Endothelial cell of umbilical vein (primary cell): ENCODE measurements at regions of chr14 and their contacts with region 1.

Region 1: DNA sequence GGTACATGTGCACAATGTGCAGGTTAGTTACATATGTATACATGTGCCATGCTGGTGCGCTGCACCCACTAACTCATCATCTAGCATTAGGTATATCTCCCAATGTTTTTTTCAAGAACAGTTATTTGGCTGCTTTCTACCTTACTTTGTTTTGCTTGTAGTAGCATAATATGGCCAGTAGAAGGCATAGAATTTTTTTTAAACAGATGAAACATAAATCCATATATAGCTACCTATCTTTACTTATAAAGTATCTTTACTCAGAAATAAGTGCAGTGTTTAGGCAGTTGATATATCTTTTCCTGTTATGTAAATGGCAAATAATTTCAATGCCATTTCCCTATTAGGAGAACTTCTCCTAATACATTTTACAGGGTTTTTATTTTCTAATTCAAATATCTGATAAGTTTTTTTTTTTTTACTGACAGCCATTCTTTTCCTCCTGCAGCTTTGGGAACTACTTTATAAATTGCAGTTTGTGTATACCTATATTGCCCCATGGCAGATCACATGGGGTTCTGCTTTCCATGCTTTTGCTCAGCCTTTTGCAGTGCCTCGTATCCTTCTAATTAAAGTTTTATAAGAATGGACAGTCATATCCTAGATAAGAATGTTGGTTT is 143.1 kb downstream of the PCNX1 start:
- DNase-seq: peak; percentile 28
- H3K4me3 ChIP-seq: no peak overlapping the region
- H3K27ac ChIP-seq: no peak overlapping the region
- H3K4me1 ChIP-seq: no peaks in the 10 kb centered on the region
- H3K27me3 ChIP-seq: no peaks in the 10 kb centered on the region
- CTCF ChIP-seq: peak in 1 of 2 donors; percentile 17
- POLR2A ChIP-seq: no peak

Region 2: GRCh38 chr14:70887207-70887681 is 163.1 kb before region 1 on chr14:
- CTCF ChIA-PET with region 1: no interaction called
- POLR2A ChIA-PET with region 1: no interaction called
- dilution Hi-C with region 1: no loop called
- intact Hi-C with region 1: no loop called
- DNase-seq: no peak
- H3K4me3 ChIP-seq: no peak overlapping the region
- H3K27ac ChIP-seq: no peak overlapping the region
- H3K4me1 ChIP-seq: peaks cover 10% of the 10 kb centered on the region
- H3K27me3 ChIP-seq: peaks cover 66 to 84% of the 10 kb centered on the region in 2 experiments
- CTCF ChIP-seq: no peak
- POLR2A ChIP-seq: no peak

Region 3: DNA sequence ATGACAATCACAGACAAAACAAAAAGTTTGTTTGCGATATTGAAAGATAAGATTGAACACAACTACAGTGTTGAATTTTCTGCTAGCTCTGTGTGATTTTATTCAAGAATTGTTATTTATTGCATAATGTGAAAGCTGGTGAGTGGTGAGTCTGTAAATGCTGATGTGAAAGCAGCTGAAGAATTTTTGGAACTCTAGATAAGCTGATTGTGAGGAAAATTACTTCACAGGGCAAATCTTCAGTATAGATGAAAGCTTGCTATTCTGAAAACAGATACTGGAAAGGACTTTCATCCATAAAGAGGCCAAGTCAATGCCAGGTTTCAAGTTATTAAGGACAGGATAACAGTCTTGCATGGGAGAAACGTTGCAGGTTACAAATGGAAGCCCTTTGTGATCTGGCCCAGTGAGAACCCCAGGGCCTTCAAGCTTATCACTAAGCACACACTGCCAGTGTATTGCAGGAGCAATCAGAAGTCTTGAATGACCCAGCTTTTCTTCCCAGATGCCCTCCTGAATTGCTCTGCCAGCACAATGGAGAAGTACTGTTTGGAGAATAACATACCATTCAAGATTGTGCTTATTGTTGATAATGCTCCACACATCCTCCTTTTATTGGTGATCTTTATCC is 10.6 kb after region 1 on chr14:
- CTCF ChIA-PET with region 1: interaction called, 26 read pairs
- POLR2A ChIA-PET with region 1: no interaction called
- dilution Hi-C with region 1: no loop called
- intact Hi-C with region 1: no loop called
- DNase-seq: no peak
- H3K4me3 ChIP-seq: no peak overlapping the region
- H3K27ac ChIP-seq: no peak overlapping the region
- H3K4me1 ChIP-seq: no peaks in the 10 kb centered on the region
- H3K27me3 ChIP-seq: no peaks in the 10 kb centered on the region
- CTCF ChIP-seq: no peak
- POLR2A ChIP-seq: no peak

Region 4: GRCh38 chr14:71430321-71431208 is 380.3 kb after region 1 on chr14:
- CTCF ChIA-PET with region 1: no interaction called
- POLR2A ChIA-PET with region 1: no interaction called
- dilution Hi-C with region 1: no loop called
- intact Hi-C with region 1: no loop called
- DNase-seq: no peak
- H3K4me3 ChIP-seq: no peak overlapping the region
- H3K27ac ChIP-seq: no peak overlapping the region
- H3K4me1 ChIP-seq: no peaks in the 10 kb centered on the region
- H3K27me3 ChIP-seq: no peaks in the 10 kb centered on the region
- CTCF ChIP-seq: no peak
- POLR2A ChIP-seq: no peak